ENCODE measurements at regions of chr18 and their contacts with region 1.

Region 1: DNA sequence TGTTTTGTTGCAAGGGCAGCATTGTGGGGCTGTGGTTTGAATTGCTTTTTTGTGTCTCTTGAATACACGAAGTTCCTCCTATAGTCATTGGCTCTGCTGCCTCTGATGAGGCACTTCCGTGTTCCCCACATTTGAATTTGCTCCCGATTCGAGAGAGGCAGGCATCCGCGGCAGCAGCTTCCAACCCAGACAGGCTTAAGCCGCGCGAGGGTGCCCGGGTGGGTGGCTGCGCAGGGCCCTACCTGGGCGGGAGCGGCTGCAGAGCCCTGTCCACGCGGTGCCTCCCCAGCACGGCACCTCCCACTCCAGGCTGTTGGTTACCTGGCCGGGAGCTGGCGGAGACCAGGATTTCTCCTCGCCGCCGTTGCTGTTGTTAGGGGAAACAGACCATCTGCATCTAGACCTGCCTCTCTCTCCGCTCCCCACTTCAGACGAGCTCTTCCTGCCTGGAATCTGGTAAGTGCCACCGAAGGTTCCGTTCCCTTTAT is 151.3 kb downstream of the NEDD4L start:
- DNase-seq: peak; percentile 58
- ATAC-seq: peak; percentile 58
- H3K4me3 Mint-ChIP-seq: peak overlapping the region; percentile 84
- H3K27ac Mint-ChIP-seq: peak overlapping the region; percentile 93
- H3K4me1 Mint-ChIP-seq: peaks cover 67% of the 10 kb centered on the region
- H3K27me3 Mint-ChIP-seq: no peaks in the 10 kb centered on the region
- CTCF ChIP-seq: no peak

Region 2: DNA sequence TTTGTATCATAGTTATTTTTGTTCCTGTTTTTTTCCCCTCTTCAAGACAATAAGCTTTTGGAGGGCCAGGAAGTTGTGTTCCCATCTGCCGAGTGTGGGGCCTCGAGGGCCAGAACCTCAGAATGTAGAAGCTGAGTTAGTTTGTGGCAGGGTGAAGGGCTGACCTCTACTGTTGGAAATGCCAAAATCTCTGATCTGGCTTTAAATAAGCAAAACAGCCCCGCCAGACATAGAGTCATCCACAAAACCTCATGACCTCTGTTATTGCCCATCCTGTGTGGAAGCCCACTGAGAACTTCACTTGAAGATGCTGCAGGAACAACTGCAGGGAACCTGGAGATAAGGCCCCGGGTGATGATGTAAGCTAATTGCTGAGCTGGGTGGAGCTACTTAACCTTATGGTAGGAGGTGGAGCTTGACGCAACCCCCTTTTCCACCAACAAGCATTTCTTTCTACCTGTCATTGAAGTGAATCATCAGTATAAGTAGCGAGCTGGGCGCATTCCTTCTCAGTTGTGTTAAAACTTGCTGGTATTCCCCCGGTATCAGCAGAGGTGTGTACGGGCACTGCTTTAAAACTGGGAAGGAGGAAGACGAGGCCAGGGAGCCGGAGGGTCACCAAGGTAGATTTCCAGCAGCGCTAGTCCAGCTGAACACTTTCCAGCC is 25.9 kb after region 1 on chr18:
- CTCF ChIA-PET with region 1: interaction called, 19 read pairs
- POLR2A ChIA-PET with region 1: no interaction called
- DNase-seq: no peak
- ATAC-seq: peak; percentile 74
- H3K4me3 Mint-ChIP-seq: no peak overlapping the region
- H3K27ac Mint-ChIP-seq: peak overlapping the region; percentile 53
- H3K4me1 Mint-ChIP-seq: peaks cover 79% of the 10 kb centered on the region
- H3K27me3 Mint-ChIP-seq: no peaks in the 10 kb centered on the region
- CTCF ChIP-seq: no peak

Region 3: DNA sequence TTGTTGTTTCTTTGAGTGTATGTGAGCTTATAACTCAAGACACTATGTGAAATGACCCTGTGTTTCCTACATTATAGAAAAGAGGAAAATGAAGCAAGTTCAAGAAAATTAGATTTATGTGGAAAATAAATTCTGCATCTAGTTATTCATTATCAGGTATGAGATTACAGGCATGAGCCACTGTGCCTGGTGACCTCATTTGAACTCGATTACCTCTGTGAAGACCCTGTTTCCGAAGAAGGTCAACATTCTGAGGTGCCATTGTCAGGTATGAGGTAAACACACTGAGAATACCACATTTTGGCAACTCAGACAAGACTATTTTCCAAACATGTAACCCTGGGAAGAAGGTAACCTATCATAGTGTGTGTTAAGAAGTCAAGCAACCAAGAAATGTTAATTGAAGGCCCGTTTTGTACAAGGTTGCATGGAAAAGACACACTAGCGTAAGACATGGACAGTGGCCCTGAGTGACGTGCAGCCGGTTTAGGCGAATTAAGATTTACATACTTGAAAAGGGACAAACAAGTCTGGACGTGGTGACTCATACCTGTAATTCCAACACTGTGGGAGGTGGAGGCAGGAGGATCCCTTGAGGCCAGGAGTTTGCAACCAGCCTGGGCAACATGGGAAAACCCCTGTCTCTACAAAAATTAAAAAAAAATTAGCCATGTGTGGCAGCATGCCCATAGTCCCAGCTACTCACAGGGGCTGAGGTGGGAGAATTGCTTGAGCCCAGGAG is 35.3 kb after region 1 on chr18:
- CTCF ChIA-PET with region 1: interaction called, 19 read pairs
- POLR2A ChIA-PET with region 1: interaction called, 3 read pairs
- DNase-seq: no peak
- ATAC-seq: no peak
- H3K4me3 Mint-ChIP-seq: no peak overlapping the region
- H3K27ac Mint-ChIP-seq: peak overlapping the region; percentile 70
- H3K4me1 Mint-ChIP-seq: peaks cover 74% of the 10 kb centered on the region
- H3K27me3 Mint-ChIP-seq: no peaks in the 10 kb centered on the region
- CTCF ChIP-seq: no peak

Region 4: DNA sequence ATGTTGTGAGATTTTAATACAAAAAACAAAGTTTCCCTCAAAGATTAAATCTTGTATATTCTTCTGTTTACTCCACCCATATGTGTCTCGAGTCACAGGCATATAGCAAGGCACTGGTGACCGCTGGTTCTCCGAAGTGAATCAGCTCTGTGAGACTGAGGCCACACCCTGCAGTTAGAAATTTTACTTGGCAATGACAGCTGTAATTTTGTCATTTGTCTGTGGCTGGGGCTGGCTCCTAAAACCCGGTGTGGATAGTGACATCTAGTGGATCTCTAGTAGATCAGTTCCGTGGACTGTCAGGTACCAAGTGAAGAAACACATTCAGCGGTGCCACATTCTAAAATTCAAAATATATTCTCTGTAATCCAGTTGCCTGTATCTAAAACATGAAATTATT is 126.7 kb after region 1 on chr18:
- CTCF ChIA-PET with region 1: interaction called, 24 read pairs
- POLR2A ChIA-PET with region 1: no interaction called
- DNase-seq: no peak
- ATAC-seq: peak; percentile 74
- H3K4me3 Mint-ChIP-seq: no peak overlapping the region
- H3K27ac Mint-ChIP-seq: no peak overlapping the region
- H3K4me1 Mint-ChIP-seq: peaks cover 4% of the 10 kb centered on the region
- H3K27me3 Mint-ChIP-seq: no peaks in the 10 kb centered on the region
- CTCF ChIP-seq: no peak

Measured in WTC11 (cell line).